Activated CD8-positive, alpha-beta T cell treated with anti-CD3 and anti-CD28 coated beads, Interleukin-2, amount 10 ng/mL, durations not matched to agents 7 days and 5 days (primary cell): ENCODE measurements at regions of chr14 and their contacts with region 1.

Region 1: DNA sequence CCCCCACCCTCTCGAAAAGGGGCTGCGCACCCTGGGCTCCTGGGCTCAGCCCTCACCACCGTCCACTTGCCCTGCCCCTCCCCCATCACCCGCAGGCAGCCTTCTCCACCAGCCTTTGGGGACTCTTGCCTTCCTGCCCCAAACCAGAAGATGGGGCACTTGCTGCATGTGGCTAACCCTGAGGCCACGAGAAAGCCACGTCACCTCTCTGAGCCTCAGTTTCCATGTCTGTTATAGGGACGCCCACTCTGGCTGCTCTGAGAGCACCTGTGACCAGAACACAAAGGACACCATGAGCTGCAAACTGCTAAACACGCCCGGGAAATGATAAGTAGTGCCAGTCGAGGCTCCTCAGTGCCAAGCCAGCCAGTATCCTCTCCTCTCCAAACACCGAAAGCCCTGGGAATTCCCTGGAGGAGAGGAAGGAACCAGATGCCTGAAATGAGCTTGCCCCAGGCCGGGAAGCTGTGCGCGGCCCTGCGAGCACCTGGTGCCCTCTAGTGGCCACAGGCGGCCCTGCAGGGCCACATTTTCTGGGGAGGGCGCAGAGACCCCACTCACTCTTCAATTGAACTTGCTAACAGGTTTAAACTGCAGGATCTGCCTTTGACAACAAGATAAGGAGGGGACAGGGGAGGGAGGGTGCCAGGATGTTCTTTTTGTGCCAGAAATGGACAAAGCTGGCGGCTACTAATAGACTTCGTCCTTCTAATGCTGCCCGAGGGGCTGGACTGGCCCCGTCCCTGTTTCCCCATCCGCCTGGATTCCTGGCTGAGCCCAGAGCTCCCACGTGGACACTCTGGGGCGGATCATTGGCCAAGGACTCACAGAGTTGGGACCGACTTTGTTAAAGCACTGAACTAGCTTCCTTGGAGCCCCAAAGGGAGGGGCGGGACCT is 10.2 kb upstream of the SERPINA9 start:
- DNase-seq: peak; percentile 41
- ATAC-seq: no peak
- H3K4me3 Mint-ChIP-seq: no peak overlapping the region
- H3K27ac Mint-ChIP-seq: no peak overlapping the region
- H3K4me1 Mint-ChIP-seq: no peaks in the 10 kb centered on the region
- H3K27me3 Mint-ChIP-seq: peaks cover 6% of the 10 kb centered on the region

Region 2: GRCh38 chr14:94423453-94424056 is 62.6 kb before region 1 on chr14:
- CTCF ChIA-PET with region 1: interaction called, 12 read pairs
- POLR2A ChIA-PET with region 1: no interaction called
- DNase-seq: peak; percentile 62
- ATAC-seq: peak; percentile 49
- H3K4me3 Mint-ChIP-seq: no peak overlapping the region
- H3K27ac Mint-ChIP-seq: no peak overlapping the region
- H3K4me1 Mint-ChIP-seq: peaks cover 1% of the 10 kb centered on the region
- H3K27me3 Mint-ChIP-seq: peaks cover 6% of the 10 kb centered on the region

Region 3: GRCh38 chr14:94439453-94440057 is 46.6 kb before region 1 on chr14:
- CTCF ChIA-PET with region 1: interaction called, 31 read pairs
- POLR2A ChIA-PET with region 1: no interaction called
- DNase-seq: no peak
- ATAC-seq: no peak
- H3K4me3 Mint-ChIP-seq: no peak overlapping the region
- H3K27ac Mint-ChIP-seq: no peak overlapping the region
- H3K4me1 Mint-ChIP-seq: no peaks in the 10 kb centered on the region
- H3K27me3 Mint-ChIP-seq: no peaks in the 10 kb centered on the region

Region 4: GRCh38 chr14:94476023-94476422 is 10.2 kb before region 1 on chr14 and contains the start of gene SERPINA9:
- CTCF ChIA-PET with region 1: interaction called, 19 read pairs
- POLR2A ChIA-PET with region 1: no interaction called
- DNase-seq: no peak
- ATAC-seq: no peak
- H3K4me3 Mint-ChIP-seq: no peak within 1 kb of the TSS
- H3K27ac Mint-ChIP-seq: no peak within 1 kb of the TSS
- H3K4me1 Mint-ChIP-seq: no peaks in the 10 kb centered on the region
- H3K27me3 Mint-ChIP-seq: no peaks in the 10 kb centered on the region
- total RNA-seq, gene SERPINA9: not detected